Activated B cell treated with CpG ODN at 0.5 μM for 24 hours (primary cell): ENCODE measurements at regions of chr19 and their contacts with region 1.

Region 1: GRCh38 chr19:49473868-49474544 is at the start of gene FLT3LG:
- DNase-seq: peak; percentile 92
- ATAC-seq: peak; percentile 45
- H3K4me3 Mint-ChIP-seq: peak within 1 kb of the TSS; percentile 92
- H3K27ac Mint-ChIP-seq: peak within 1 kb of the TSS; percentile 91
- H3K4me1 Mint-ChIP-seq: peaks cover 67% of the 10 kb centered on the region
- H3K27me3 Mint-ChIP-seq: no peaks in the 10 kb centered on the region
- CTCF ChIP-seq: peak; percentile 52
- total RNA-seq, gene FLT3LG: 15.4 and 17.7 TPM in 2 replicates

Region 2: DNA sequence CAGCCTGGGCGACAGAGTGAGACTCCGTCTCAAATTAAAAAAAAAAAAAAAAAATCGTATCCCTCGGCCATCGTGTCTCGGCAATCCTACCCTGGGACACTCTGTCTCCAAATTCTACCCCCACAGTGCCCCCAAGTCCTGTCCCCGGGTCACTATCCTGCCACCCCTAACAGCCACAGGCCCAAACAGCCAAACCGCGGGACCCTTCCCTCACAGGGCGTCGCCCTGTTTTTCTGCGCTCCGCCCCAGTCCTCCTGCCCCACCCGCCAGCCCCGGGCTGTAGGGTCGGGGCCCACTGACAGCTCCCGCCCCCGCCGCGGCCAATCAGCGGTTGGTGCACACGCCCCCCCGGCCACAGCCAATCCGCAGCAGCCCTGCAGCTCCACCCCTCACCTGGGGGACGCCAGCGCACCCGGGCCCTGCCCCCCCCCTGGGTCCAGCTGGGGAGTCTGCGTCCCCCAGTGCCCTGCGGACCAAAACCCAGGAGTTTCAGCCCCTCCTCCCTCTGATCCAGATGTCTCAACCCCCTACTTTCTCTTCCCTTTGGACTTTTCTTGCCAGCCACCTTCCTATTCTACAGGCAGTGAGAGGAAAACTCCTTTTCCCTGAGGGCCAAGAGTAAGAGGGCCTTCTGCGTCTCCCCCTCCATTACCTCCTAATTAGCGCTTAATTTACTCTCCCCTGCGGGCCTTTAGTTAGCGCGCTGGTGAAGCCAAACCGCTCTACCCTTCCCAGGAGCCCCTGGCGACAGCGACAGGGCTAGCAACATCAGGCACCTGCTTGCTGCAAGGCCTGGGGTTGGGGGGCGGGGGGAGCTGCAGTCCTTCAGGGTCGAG is 661.7 kb before region 1 on chr19:
- CTCF ChIA-PET with region 1: no interaction called
- POLR2A ChIA-PET with region 1: interaction called, 16 read pairs
- intact Hi-C with region 1: no loop called
- DNase-seq: peak; percentile 74
- ATAC-seq: peak; percentile 77
- H3K4me3 Mint-ChIP-seq: peak overlapping the region; percentile 88
- H3K27ac Mint-ChIP-seq: peak overlapping the region; percentile 91
- H3K4me1 Mint-ChIP-seq: peaks cover 29% of the 10 kb centered on the region
- H3K27me3 Mint-ChIP-seq: no peaks in the 10 kb centered on the region
- CTCF ChIP-seq: no peak

Region 3: GRCh38 chr19:49409441-49410029 is 64.5 kb before region 1 on chr19:
- CTCF ChIA-PET with region 1: no interaction called
- POLR2A ChIA-PET with region 1: no interaction called
- intact Hi-C with region 1: no loop called
- DNase-seq: no peak
- ATAC-seq: peak; percentile 83
- H3K4me3 Mint-ChIP-seq: peak overlapping the region; percentile 67
- H3K27ac Mint-ChIP-seq: peak overlapping the region; percentile 89
- H3K4me1 Mint-ChIP-seq: peaks cover 56% of the 10 kb centered on the region
- H3K27me3 Mint-ChIP-seq: no peaks in the 10 kb centered on the region
- CTCF ChIP-seq: no peak

Region 4: GRCh38 chr19:49487277-49488045 is 13.5 kb after region 1 on chr19 and contains the start of gene RPL13A:
- CTCF ChIA-PET with region 1: interaction called, 3 read pairs
- POLR2A ChIA-PET with region 1: interaction called, 18 read pairs
- intact Hi-C with region 1: loop called (anchors 1 kb)
- DNase-seq: peak; percentile 100
- ATAC-seq: peak; percentile 91
- H3K4me3 Mint-ChIP-seq: peak within 1 kb of the TSS; percentile 93
- H3K27ac Mint-ChIP-seq: peak within 1 kb of the TSS; percentile 91
- H3K4me1 Mint-ChIP-seq: peaks cover 37% of the 10 kb centered on the region
- H3K27me3 Mint-ChIP-seq: peaks cover 2% of the 10 kb centered on the region
- CTCF ChIP-seq: no peak
- total RNA-seq, gene RPL13A: 6,642 and 7,342 TPM in 2 replicates